GM12878 (cell line): ENCODE measurements at regions of chr20 and their contacts with region 1.

Region 1: GRCh38 chr20:39874049-39874888 is 814.8 kb downstream of the MAFB start:
- DNase-seq: peak; percentile 60
- ATAC-seq: peak; percentile 99
- H3K4me3 ChIP-seq: no peak overlapping the region
- H3K27ac ChIP-seq: no peak overlapping the region
- H3K4me1 ChIP-seq: no peaks in the 10 kb centered on the region; the same call in 1 of the 2 replicates
- H3K27me3 ChIP-seq: no peaks in the 10 kb centered on the region
- CTCF ChIP-seq: peak; percentile 86 to 98 (median 91)
- EP300 ChIP-seq: no peak
- POLR2A ChIP-seq: no peak
- RAD21 ChIP-seq: peak; percentile 91

Region 2: GRCh38 chr20:39264506-39265172 is 609.6 kb before region 1 on chr20:
- CTCF ChIA-PET with region 1: interaction called, 88 read pairs
- POLR2A ChIA-PET with region 1: no interaction called
- RAD21 ChIA-PET with region 1: interaction called, 43 read pairs
- SMC1A ChIA-PET with region 1: interaction called, 22 read pairs
- in situ Hi-C with region 1: no loop called
- intact Hi-C with region 1: loop called (anchors 1 kb)
- DNase-seq: no peak
- ATAC-seq: peak; percentile 80
- H3K4me3 ChIP-seq: no peak overlapping the region
- H3K27ac ChIP-seq: no peak overlapping the region
- H3K4me1 ChIP-seq: no peaks in the 10 kb centered on the region
- H3K27me3 ChIP-seq: no peaks in the 10 kb centered on the region
- CTCF ChIP-seq: peak; percentile 72 to 88 (median 88)
- EP300 ChIP-seq: no peak
- POLR2A ChIP-seq: no peak
- RAD21 ChIP-seq: peak; percentile 54

Region 3: GRCh38 chr20:39446397-39446796 is 427.9 kb before region 1 on chr20:
- CTCF ChIA-PET with region 1: interaction called, 4 read pairs
- POLR2A ChIA-PET with region 1: no interaction called
- RAD21 ChIA-PET with region 1: no interaction called
- SMC1A ChIA-PET with region 1: no interaction called
- in situ Hi-C with region 1: no loop called
- intact Hi-C with region 1: loop called (anchors 10 kb)
- DNase-seq: peak; percentile 19
- ATAC-seq: peak; percentile 60
- H3K4me3 ChIP-seq: no peak overlapping the region
- H3K27ac ChIP-seq: no peak overlapping the region
- H3K4me1 ChIP-seq: no peaks in the 10 kb centered on the region
- H3K27me3 ChIP-seq: no peaks in the 10 kb centered on the region
- CTCF ChIP-seq: no peak
- EP300 ChIP-seq: peak in 1 of 2 experiments; percentile 12; a peak in 1 of 4 replicates
- POLR2A ChIP-seq: no peak
- RAD21 ChIP-seq: no peak

Region 4: DNA sequence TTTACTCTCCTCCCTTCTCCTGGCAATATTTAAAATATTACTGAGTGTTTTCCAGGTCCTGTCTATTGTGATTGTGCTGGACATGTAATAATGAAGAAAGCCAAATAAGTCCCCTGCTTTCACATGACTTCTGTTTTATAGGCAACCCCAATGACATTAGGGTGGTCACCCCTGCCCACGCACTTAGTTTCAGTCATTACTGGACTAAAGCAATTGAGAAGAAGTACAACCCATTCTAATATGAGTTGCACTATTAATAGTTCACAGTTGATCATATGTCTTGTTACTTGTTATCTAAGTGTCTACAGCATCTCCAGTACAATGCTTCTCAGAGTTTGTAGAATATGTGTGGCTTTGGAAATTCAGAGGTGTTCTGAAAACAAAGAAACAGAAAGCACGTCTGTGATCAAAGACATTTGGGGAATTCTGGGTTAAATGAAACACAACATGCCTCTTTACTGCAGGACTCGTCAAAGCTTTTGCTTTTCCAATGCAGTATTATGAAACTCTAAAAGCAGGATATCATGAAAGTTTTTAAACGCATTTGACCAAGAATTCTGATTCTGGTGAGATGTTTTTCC is 122.6 kb before region 1 on chr20:
- CTCF ChIA-PET with region 1: interaction called, 13 read pairs
- POLR2A ChIA-PET with region 1: interaction called, 3 read pairs
- RAD21 ChIA-PET with region 1: interaction called, 16 read pairs
- SMC1A ChIA-PET with region 1: interaction called, 15 read pairs
- in situ Hi-C with region 1: no loop called
- intact Hi-C with region 1: no loop called
- DNase-seq: peak; percentile 12
- ATAC-seq: peak; percentile 84
- H3K4me3 ChIP-seq: no peak overlapping the region
- H3K27ac ChIP-seq: no peak overlapping the region
- H3K4me1 ChIP-seq: no peaks in the 10 kb centered on the region
- H3K27me3 ChIP-seq: no peaks in the 10 kb centered on the region
- CTCF ChIP-seq: no peak
- EP300 ChIP-seq: peak; percentile 60 to 62; a peak in 3 of 4 replicates
- POLR2A ChIP-seq: no peak
- RAD21 ChIP-seq: no peak

Region 5: DNA sequence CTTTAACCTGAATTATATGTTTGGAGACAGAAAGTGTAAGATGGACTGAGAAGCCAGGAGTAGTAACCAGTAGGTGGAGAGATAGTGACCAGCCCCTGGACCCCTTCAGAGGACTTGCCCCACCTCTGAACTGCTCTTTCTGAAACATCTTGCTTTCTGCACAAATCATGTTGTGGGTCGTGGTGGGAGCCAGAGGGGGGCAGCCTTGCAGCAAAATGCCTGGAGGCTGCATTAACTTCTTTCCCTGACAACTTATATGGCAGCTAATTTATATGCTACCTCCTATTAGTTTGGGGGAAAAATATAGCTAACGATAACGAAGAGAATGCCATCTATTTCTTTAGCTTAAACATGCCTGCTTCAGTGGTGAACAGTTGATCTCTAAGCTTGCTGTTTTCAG is 45.0 kb before region 1 on chr20:
- CTCF ChIA-PET with region 1: interaction called, 123 read pairs
- POLR2A ChIA-PET with region 1: interaction called, 10 read pairs
- RAD21 ChIA-PET with region 1: interaction called, 54 read pairs
- SMC1A ChIA-PET with region 1: interaction called, 72 read pairs
- in situ Hi-C with region 1: no loop called
- intact Hi-C with region 1: loop called (anchors 5 kb)
- DNase-seq: no peak
- ATAC-seq: peak; percentile 39
- H3K4me3 ChIP-seq: no peak overlapping the region; the same call in 1 of the 2 replicates
- H3K27ac ChIP-seq: peak overlapping the region; percentile 68
- H3K4me1 ChIP-seq: peaks cover 36% of the 10 kb centered on the region
- H3K27me3 ChIP-seq: no peaks in the 10 kb centered on the region
- CTCF ChIP-seq: peak; percentile 32 to 38 (median 34); a peak in 4 of 6 replicates
- EP300 ChIP-seq: no peak
- POLR2A ChIP-seq: no peak
- RAD21 ChIP-seq: peak; percentile 33

Region 6: GRCh38 chr20:39885975-39886649 is 11.8 kb after region 1 on chr20:
- CTCF ChIA-PET with region 1: interaction called, 15 read pairs
- POLR2A ChIA-PET with region 1: no interaction called
- RAD21 ChIA-PET with region 1: interaction called, 3 read pairs
- SMC1A ChIA-PET with region 1: interaction called, 6 read pairs
- in situ Hi-C with region 1: no loop called
- intact Hi-C with region 1: no loop called
- DNase-seq: no peak
- ATAC-seq: peak; percentile 88
- H3K4me3 ChIP-seq: no peak overlapping the region
- H3K27ac ChIP-seq: no peak overlapping the region
- H3K4me1 ChIP-seq: no peaks in the 10 kb centered on the region
- H3K27me3 ChIP-seq: no peaks in the 10 kb centered on the region
- CTCF ChIP-seq: peak; percentile 56 to 73 (median 70); a peak in 5 of 6 replicates
- EP300 ChIP-seq: no peak
- POLR2A ChIP-seq: no peak
- RAD21 ChIP-seq: peak; percentile 63

Region 7: GRCh38 chr20:39986173-39986904 is 112.1 kb after region 1 on chr20:
- CTCF ChIA-PET with region 1: no interaction called
- POLR2A ChIA-PET with region 1: no interaction called
- RAD21 ChIA-PET with region 1: no interaction called
- SMC1A ChIA-PET with region 1: no interaction called
- in situ Hi-C with region 1: no loop called
- intact Hi-C with region 1: no loop called
- DNase-seq: no peak
- ATAC-seq: no peak
- H3K4me3 ChIP-seq: no peak overlapping the region
- H3K27ac ChIP-seq: no peak overlapping the region
- H3K4me1 ChIP-seq: no peaks in the 10 kb centered on the region
- H3K27me3 ChIP-seq: no peaks in the 10 kb centered on the region
- CTCF ChIP-seq: no peak
- EP300 ChIP-seq: no peak
- POLR2A ChIP-seq: no peak
- RAD21 ChIP-seq: no peak